Posterior cingulate gyrus (tissue), 11 donors: ENCODE measurements at regions of chr16 and their contacts with region 1.

Region 1: DNA sequence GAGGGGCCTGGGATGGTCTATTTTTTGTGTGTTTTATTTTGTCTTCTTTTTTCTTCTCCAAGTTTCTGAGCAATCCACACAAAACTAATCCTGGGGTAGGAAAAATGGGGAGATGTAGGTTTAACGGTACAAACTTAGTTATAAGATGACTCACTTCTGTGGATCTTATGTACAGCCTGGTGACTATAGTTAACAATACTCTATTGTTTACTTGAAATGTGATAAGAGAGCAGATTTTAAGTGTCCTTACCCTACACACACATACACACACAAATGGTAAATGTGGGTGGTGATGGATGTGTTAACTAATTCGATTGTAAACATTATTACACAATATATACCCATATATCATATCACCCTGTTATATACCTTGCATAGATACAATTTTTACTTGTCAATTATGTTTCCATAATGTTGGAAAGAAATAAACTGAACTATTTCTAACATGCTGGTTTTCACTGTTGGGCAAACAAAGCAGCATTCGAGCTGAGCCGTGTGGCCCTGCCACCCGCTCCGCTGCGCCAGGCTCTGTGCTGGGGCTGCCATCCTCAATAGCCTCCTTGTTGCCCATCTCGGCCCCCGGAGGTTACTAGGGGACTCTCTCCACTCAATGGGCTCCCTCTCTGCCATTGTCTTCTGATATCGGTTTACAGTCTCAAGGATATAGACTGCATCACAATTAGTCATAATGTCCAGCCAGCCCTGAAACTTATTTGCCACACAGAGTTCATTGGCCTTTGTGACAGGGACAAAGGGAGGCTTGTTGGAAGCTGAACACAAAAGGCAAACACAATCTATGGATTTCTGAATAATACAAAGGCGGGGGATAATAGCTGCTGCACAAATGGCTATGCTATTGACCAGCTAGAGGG is 380.3 kb upstream of the MAF start:
- DNase-seq: peak; percentile 46 to 95 (median 70)

Region 2: GRCh38 chr16:79912592-79913310 is 68.1 kb before region 1 on chr16:
- intact Hi-C with region 1: no loop called
- DNase-seq: no peak

Region 3: DNA sequence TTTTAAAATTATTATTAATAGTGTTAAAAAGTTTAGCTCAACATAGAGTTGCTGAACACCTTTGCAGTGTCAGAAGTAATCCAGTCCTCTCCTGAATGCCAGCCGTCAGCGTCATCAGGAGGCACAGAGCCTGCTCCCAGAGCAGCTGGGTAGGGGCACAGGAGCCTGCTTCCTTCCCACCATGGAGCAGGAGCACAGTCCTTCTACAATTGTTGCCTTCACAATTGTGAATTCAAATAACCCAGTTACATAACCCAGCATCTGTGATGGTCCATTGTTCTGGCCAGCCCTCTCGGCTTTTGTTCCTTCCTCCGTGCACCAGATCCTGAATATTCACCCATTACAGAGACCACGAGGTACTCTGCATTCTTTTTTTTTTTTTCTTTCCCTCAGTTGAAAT is 13.5 kb after region 1 on chr16:
- intact Hi-C with region 1: loop called (anchors 1 kb)
- DNase-seq: peak in 9 of 10 donors; percentile 36 to 94 (median 55)